ENCODE measurements at regions of chr15 and their contacts with region 1.

Region 1: GRCh38 chr15:41039121-41039520 is 77.0 kb downstream of the INO80 start:
- DNase-seq: no peak
- H3K4me3 ChIP-seq: no peak overlapping the region
- H3K4me3 Mint-ChIP-seq: no peak overlapping the region
- H3K27ac Mint-ChIP-seq: no peak overlapping the region
- H3K4me1 ChIP-seq: no peaks in the 10 kb centered on the region
- H3K4me1 Mint-ChIP-seq: no peaks in the 10 kb centered on the region
- H3K27me3 ChIP-seq: no peaks in the 10 kb centered on the region
- H3K27me3 Mint-ChIP-seq: no peaks in the 10 kb centered on the region
- CTCF ChIP-seq: no peak

Region 2: GRCh38 chr15:40857601-40858341 is 181.3 kb before region 1 on chr15:
- CTCF ChIA-PET with region 1: no interaction called
- POLR2A ChIA-PET with region 1: no interaction called
- intact Hi-C with region 1: no loop called
- DNase-seq: peak; percentile 92 to 96
- H3K4me3 ChIP-seq: no peak overlapping the region
- H3K4me3 Mint-ChIP-seq: peak overlapping the region; percentile 56
- H3K27ac Mint-ChIP-seq: peak overlapping the region; percentile 86
- H3K4me1 ChIP-seq: peaks cover 24% of the 10 kb centered on the region
- H3K4me1 Mint-ChIP-seq: peaks cover 39% of the 10 kb centered on the region
- H3K27me3 ChIP-seq: no peaks in the 10 kb centered on the region
- H3K27me3 Mint-ChIP-seq: no peaks in the 10 kb centered on the region
- CTCF ChIP-seq: peak; percentile 89 to 94

Region 3: GRCh38 chr15:41102854-41103253 is 63.7 kb after region 1 on chr15:
- CTCF ChIA-PET with region 1: no interaction called
- POLR2A ChIA-PET with region 1: no interaction called
- intact Hi-C with region 1: loop called (anchors 2 kb)
- DNase-seq: no peak
- H3K4me3 ChIP-seq: no peak overlapping the region
- H3K4me3 Mint-ChIP-seq: no peak overlapping the region
- H3K27ac Mint-ChIP-seq: no peak overlapping the region
- H3K4me1 ChIP-seq: no peaks in the 10 kb centered on the region
- H3K4me1 Mint-ChIP-seq: peaks cover 6% of the 10 kb centered on the region
- H3K27me3 ChIP-seq: no peaks in the 10 kb centered on the region
- H3K27me3 Mint-ChIP-seq: no peaks in the 10 kb centered on the region
- CTCF ChIP-seq: no peak